G401 (cell line): ENCODE measurements at regions of chr6 and their contacts with region 1.

Region 1: DNA sequence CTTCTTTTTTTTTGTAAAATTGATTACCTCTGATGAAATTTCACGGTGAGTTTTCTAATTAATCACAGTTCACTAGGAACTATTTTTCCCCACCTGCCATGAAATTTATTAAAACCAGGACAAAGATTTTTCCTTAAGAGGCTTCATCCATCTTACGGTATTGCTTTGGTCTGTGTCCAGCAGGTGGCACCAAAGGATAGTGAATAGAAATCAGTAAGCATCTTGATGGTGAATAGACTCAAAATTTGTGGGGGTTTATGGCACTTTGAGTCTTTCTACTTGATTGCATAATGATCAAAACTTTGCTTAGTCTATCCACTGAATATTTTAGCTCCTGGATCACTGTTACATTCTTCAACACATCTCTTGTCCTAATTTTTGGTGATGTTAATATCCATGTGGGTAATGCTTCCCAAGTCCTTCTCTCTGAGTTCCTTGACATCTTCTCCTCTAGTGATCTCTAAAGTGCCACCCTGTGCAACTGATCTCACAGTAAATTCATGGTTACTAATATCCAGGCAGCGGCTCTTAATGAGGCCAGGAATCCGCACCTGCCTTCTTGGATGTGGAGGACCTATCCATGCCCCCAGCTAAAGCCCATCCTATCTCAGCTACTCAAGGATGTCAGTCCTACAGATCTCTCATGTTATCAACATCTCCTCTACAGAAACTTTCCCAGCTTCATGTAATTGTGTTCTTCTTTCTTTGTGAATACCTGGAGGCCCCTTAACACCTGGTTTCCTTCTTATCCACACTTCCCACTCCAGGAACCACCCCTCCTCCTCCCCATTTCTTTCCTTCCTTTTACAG is 54.5 kb downstream of the STMND1 start:
- DNase-seq: peak; percentile 92

Region 2: GRCh38 chr6:17790489-17790888 is 634.2 kb after region 1 on chr6:
- in situ Hi-C with region 1: loop called (anchors 25 kb)
- DNase-seq: no peak